CD8-positive, alpha-beta memory T cell (primary cell): ENCODE measurements at regions of chr9 and their contacts with region 1.

Region 1: GRCh38 chr9:34620061-34620994 is at the start of gene DCTN3:
- DNase-seq: peak; percentile 86 to 96 (median 89)
- H3K4me3 ChIP-seq: peak within 1 kb of the TSS; percentile 64
- H3K4me3 Mint-ChIP-seq: peak within 1 kb of the TSS; percentile 93 to 97 (median 95)
- H3K27ac ChIP-seq: peak within 1 kb of the TSS; percentile 59
- H3K27ac Mint-ChIP-seq: peak within 1 kb of the TSS; percentile 72 to 97 (median 95)
- H3K4me1 ChIP-seq: peaks cover 19% of the 10 kb centered on the region
- H3K4me1 Mint-ChIP-seq: peaks cover 28 to 42% (median 29%) of the 10 kb centered on the region in 3 donors
- H3K27me3 ChIP-seq: peaks cover 27% of the 10 kb centered on the region
- H3K27me3 Mint-ChIP-seq: peaks cover 30 to 31% of the 10 kb centered on the region in 2 donors
- total RNA-seq, gene DCTN3: 83.3 to 83.4 TPM

Region 2: DNA sequence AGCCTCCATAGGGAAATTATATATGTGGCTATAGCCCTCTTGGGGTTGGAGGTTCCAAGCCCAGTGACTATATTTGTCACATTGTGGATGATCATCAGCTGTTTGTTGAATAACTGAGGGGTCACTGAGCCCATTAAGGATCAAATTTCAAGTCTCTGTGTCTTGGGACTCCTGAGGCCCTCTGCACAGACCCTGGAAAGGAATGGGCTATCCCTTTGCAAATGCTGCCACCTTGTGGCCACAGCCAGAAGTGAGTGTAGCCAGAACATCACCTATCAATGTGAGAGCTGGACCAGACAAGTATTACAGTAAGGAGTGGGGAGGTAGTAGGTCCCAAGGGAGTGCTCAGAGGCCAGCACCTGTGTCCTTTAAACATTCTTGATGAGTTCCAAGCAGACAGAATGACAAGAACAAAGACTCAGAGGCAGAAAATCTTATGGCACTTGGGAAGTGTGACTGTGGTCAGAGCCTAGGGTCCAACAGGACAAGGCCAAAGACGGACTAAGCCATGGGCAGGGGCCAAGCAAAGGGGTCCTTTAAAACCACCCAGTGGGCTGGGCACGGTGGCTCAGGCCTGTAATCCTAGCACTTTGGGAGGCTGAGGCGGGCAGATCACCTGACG is 16.6 kb before region 1 on chr9:
- CTCF ChIA-PET with region 1: interaction called, 18 read pairs
- POLR2A ChIA-PET with region 1: no interaction called
- DNase-seq: peak; percentile 65 to 86 (median 73)
- H3K4me3 ChIP-seq: no peak overlapping the region
- H3K4me3 Mint-ChIP-seq: peak overlapping the region in 1 of 7 donors; percentile 2
- H3K27ac ChIP-seq: no peak overlapping the region
- H3K27ac Mint-ChIP-seq: no peak overlapping the region
- H3K4me1 ChIP-seq: no peaks in the 10 kb centered on the region
- H3K4me1 Mint-ChIP-seq: no peaks in the 10 kb centered on the region
- H3K27me3 ChIP-seq: no peaks in the 10 kb centered on the region
- H3K27me3 Mint-ChIP-seq: no peaks in the 10 kb centered on the region